Heart left ventricle (tissue), 16 donors: ENCODE measurements at regions of chr7 and their contacts with region 1.

Region 1: GRCh38 chr7:99514050-99514449 is 9.6 kb downstream of the ZKSCAN5 start:
- DNase-seq: no peak
- ATAC-seq: no peak
- H3K4me3 ChIP-seq: no peak overlapping the region
- H3K27ac ChIP-seq: no peak overlapping the region
- H3K4me1 ChIP-seq: peaks cover 0 to 3% (median 0%) of the 10 kb centered on the region in 12 donors
- H3K27me3 ChIP-seq: no peaks in the 10 kb centered on the region
- CTCF ChIP-seq: no peak
- POLR2A ChIP-seq: no peak

Region 2: DNA sequence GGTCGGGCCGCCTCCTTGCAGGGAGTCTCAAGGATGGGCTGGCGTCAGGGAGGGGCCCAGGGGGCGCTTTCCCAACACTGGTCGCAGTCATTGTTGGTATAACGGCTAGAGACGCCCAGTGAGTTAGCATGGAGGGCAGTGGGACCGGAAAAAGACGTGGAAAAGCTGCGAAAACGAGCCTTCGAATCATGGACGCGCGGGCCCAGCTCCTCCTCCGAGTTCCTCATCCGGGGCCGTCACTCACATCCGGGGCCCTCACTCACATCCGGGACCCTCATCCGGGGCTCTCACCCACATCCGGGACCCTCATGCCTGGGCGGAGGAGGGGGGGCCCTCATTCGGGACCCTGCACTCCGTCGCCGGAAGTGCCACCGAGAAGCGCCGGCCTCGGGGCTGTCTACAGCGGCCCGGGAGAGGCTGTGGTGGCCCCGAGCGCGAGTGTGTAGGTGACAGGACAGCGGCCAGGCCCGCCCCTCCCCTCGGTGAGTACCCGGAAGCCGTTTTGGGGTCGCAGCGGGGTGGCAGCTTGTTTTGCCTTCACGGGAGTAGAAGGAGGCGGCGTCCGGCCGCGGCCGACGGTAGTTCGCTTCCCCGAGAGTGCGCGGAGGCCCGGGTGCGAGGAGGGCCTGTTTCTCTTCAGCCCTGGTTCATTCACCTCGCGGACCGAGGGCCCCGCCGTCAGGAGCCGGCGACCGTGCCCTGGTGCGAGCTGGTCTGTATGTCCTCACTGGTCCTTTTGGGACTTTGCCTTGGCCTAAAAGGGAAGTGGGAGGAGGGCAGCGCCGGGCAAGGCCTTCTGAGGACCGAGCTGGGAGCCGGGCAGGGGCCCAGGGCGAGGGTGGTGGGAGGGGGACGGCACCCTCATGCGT is 44.5 kb after region 1 on chr7 and contains the start of gene ZNF655:
- intact Hi-C with region 1: loop called in 3 of 10 experiments (anchors 5 to 10 kb)
- DNase-seq: peak; percentile 93 to 95 (median 94)
- ATAC-seq: peak; percentile 96 to 98 (median 98)
- H3K4me3 ChIP-seq: peak within 1 kb of the TSS; percentile 58 to 99 (median 88)
- H3K27ac ChIP-seq: peak within 1 kb of the TSS; percentile 91 to 99 (median 96)
- H3K4me1 ChIP-seq: peaks cover 0 to 46% (median 23%) of the 10 kb centered on the region in 12 donors
- H3K27me3 ChIP-seq: no peaks in the 10 kb centered on the region
- CTCF ChIP-seq: peak in 2 of 12 donors; percentile 2 to 6
- POLR2A ChIP-seq: peak in 1 of 2 donors; percentile 70
- total RNA-seq, gene ZNF655: 26.8 to 48.0 (median 32.8) TPM

Region 3: GRCh38 chr7:99624484-99624883 is 110.4 kb after region 1 on chr7:
- intact Hi-C with region 1: loop called in 1 of 10 experiments (anchors 10 kb)
- DNase-seq: no peak
- ATAC-seq: no peak
- H3K4me3 ChIP-seq: no peak overlapping the region
- H3K27ac ChIP-seq: no peak overlapping the region
- H3K4me1 ChIP-seq: peaks cover 0 to 6% (median 0%) of the 10 kb centered on the region in 12 donors
- H3K27me3 ChIP-seq: no peaks in the 10 kb centered on the region
- CTCF ChIP-seq: no peak
- POLR2A ChIP-seq: no peak